ENCODE measurements at regions of chr5 and their contacts with region 1.

Region 1: DNA sequence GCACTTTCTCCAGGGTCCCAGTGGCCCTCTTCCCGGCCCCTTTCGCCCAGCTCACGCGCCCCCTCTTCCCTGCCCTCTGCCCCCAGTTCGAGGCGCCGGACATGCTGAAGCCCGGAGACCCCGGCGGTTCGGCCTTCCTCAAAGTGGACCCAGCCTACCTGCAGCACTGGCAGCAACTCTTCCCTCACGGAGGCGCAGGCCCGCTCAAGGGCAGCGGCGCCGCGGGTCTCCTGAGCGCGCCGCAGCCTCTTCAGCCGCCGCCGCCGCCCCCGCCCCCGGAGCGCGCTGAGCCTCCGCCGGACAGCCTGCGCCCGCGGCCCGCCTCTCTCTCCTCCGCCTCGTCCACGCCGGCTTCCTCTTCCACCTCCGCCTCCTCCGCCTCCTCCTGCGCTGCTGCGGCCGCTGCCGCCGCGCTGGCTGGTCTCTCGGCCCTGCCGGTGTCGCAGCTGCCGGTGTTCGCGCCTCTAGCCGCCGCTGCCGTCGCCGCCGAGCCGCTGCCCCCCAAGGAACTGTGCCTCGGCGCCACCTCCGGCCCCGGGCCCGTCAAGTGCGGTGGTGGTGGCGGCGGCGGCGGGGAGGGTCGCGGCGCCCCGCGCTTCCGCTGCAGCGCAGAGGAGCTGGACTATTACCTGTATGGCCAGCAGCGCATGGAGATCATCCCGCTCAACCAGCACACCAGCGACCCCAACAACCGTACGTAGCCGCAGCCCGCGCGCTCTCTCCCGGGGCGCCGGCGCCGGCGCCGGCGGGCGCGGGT is 1.1 kb downstream of the PRDM6 start:
- DNase-seq: no peak
- ATAC-seq: peak; percentile 64
- H3K4me3 ChIP-seq: peak overlapping the region; percentile 41 to 60
- H3K27ac ChIP-seq: no peak overlapping the region
- H3K4me1 ChIP-seq: no peaks in the 10 kb centered on the region; the same call in 1 of the 2 replicates
- H3K27me3 ChIP-seq: peaks cover 51% of the 10 kb centered on the region
- CTCF ChIP-seq: no peak

Region 2: GRCh38 chr5:123485275-123485674 is 395.2 kb after region 1 on chr5:
- CTCF ChIA-PET with region 1: interaction called, 12 read pairs
- POLR2A ChIA-PET with region 1: no interaction called
- in situ Hi-C with region 1: no loop called
- intact Hi-C with region 1: no loop called
- DNase-seq: no peak
- ATAC-seq: no peak
- H3K4me3 ChIP-seq: no peak overlapping the region
- H3K27ac ChIP-seq: no peak overlapping the region
- H3K4me1 ChIP-seq: no peaks in the 10 kb centered on the region
- H3K27me3 ChIP-seq: peaks cover 23% of the 10 kb centered on the region
- CTCF ChIP-seq: no peak; the same call in 1 of the 2 replicates

Region 3: DNA sequence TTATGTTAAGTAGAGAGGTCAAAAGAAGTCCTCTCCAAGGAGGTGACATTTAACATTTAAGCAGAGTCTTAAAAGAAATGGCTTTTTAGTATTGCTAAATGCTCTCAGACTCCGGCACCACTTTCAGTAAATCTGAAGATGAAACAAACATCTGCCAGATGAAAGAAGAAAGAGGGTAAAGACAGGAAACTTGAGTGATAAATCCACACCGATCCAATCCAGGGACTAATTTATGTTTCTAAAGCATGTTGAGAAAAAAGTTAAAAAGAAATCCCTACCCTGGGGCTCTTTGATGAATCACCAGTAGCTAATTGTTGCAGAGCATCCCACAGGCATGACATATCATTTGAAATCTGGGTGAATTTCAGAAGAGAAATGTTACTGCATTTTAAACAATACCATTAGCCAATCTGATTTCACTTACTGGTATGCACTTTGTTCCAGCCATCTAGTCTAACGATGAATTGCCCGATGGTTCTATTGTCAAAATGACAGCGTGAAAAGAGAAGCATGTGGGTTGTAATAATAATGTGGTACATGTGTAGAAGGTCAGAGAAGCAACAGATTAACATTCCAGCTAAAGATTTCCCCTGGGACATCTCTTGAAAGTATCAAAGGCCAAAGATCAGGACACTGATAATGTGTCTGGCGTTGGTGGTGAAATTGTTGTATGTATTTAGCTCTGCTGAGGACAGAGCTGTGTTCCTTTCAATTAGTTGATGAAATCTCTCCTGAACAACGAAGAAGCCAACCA is 907.5 kb after region 1 on chr5:
- CTCF ChIA-PET with region 1: no interaction called
- POLR2A ChIA-PET with region 1: no interaction called
- in situ Hi-C with region 1: no loop called
- intact Hi-C with region 1: no loop called
- DNase-seq: no peak
- ATAC-seq: no peak
- H3K4me3 ChIP-seq: no peak overlapping the region
- H3K27ac ChIP-seq: peak overlapping the region; percentile 62; the same call in 1 of the 2 replicates
- H3K4me1 ChIP-seq: peaks cover 7% of the 10 kb centered on the region; the same call in 1 of the 2 replicates
- H3K27me3 ChIP-seq: no peaks in the 10 kb centered on the region
- CTCF ChIP-seq: no peak